Dorsolateral prefrontal cortex (tissue), 120 donors: ENCODE measurements at regions of chr16 and their contacts with region 1.

Region 1: DNA sequence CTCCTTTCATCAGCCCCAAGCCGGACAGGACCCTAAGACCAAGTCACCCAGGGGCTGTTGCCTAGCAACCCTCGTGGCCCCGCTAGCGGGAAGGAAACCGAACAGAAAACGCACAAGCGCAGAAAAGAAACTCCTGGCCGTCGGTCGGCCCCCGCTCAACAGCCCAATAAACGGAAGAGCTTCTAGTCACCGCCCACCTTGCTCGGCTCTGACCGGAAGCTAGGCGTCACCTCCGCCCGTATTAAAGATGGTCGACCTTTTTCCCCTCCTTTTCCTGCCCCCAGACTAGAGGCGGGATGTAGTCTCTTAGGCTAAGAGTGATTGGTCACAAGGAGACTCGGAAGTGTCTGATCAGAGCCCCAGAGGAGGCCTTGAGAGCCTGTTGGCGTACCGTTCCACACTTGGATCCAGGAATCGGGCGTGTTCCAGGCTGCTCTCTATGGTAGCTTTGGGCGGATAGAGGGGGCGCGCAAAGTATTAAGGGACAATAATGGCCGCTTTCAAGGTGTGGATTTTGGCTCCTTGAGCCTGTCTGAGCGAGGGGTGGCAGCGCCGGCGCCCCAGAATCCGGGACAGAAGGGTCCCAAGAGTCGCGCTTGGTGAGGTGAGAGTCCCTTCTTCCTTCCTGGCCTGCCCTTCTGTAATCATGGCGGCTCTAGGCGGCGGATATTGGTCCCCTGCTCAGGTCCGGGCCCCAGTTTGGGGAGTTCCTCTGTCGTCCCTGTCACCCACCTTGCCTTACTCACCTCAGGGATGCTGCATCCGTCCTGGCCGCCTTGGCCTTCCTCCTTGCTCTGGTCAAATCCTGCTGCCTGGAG is at the starts of genes DHX38 and TXNL4B:
- DNase-seq: peak; percentile 84 to 98 (median 96)
- H3K4me3 ChIP-seq: peak within 1 kb of the TSS; percentile 50 to 100 (median 92)
- H3K27ac ChIP-seq: peak within 1 kb of the TSS; percentile 35 to 97 (median 88)
- H3K27me3 ChIP-seq: no peaks in the 10 kb centered on the region
- CTCF ChIP-seq: peak in 38 of 56 donors; percentile 9 to 58 (median 36)
- total RNA-seq, gene DHX38: 14.9 to 69.2 (median 49.3) TPM
- total RNA-seq, gene TXNL4B: 6.8 to 28.6 (median 18.1) TPM

Region 2: DNA sequence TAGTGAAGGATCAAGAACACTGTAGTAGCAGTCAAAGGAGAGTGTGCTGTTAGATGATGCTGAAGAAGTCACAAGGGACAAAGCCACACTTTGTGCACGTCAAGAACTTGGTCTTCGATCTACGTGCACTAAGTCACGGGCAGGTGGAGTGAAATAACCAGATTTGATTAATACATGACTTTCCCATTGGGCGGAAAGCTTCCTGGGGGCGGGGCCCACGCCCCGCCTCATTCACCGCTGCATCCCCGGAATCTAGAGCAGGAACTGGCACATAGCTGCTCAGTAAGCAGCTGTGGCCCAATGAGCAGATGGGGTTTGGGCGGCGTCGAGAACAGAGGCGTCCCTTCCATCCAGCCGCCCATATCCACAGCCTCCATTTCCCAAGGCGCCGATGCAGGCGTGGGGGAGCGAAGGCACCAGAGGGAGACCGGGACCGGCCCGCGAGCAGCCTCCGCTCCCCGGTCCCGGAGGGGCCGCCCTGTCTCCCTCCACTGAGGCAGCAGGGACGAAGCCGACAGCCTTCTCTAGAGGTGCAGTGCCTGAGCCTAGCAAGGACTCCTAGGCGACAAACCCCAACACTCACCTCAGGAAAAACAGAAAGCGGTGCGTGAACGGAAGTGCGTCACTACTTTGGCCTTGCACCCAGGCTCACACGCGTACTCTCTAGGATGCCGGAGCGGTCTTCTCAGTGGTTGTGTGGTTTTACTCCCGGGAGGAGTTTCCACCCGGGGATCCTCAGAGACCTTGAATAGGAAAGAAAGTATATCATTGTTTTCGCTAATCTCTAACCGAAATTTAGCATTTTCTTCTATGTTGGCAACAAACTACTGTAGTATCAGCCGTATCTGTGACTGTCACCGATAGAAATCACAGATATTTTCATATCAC is 609.4 kb before region 1 on chr16:
- intact Hi-C with region 1: loop called in 1 of 2 experiments (anchors 10 kb)
- DNase-seq: peak; percentile 85 to 96 (median 91)
- H3K4me3 ChIP-seq: peak overlapping the region; percentile 60 to 100 (median 90)
- H3K27ac ChIP-seq: peak overlapping the region; percentile 77 to 99 (median 94)
- H3K27me3 ChIP-seq: no peaks in the 10 kb centered on the region
- CTCF ChIP-seq: peak in 33 of 56 donors; percentile 2 to 59 (median 31)

Region 3: GRCh38 chr16:71808593-71809459 is 284.8 kb before region 1 on chr16 and contains the start of gene AP1G1:
- intact Hi-C with region 1: loop called in 1 of 2 experiments (anchors 10 kb)
- DNase-seq: peak; percentile 83 to 97 (median 95)
- H3K4me3 ChIP-seq: peak within 1 kb of the TSS; percentile 66 to 100 (median 99)
- H3K27ac ChIP-seq: peak within 1 kb of the TSS; percentile 87 to 99 (median 97)
- H3K27me3 ChIP-seq: no peaks in the 10 kb centered on the region
- CTCF ChIP-seq: peak in 13 of 56 donors; percentile 3 to 39 (median 21)
- total RNA-seq, gene AP1G1: 81.3 to 131 (median 109) TPM

Region 4: GRCh38 chr16:72008424-72009216 is 85.0 kb before region 1 on chr16 and contains the start of gene DHODH:
- intact Hi-C with region 1: loop called (anchors 5 kb)
- DNase-seq: peak; percentile 93 to 99 (median 98)
- H3K4me3 ChIP-seq: peak within 1 kb of the TSS; percentile 64 to 100 (median 94)
- H3K27ac ChIP-seq: peak within 1 kb of the TSS in 42 of 59 donors; percentile 3 to 79 (median 54)
- H3K27me3 ChIP-seq: no peaks in the 10 kb centered on the region
- CTCF ChIP-seq: peak in 48 of 56 donors; percentile 9 to 64 (median 39)
- total RNA-seq, gene DHODH: 2.7 to 10.4 (median 5.8) TPM

Region 5: DNA sequence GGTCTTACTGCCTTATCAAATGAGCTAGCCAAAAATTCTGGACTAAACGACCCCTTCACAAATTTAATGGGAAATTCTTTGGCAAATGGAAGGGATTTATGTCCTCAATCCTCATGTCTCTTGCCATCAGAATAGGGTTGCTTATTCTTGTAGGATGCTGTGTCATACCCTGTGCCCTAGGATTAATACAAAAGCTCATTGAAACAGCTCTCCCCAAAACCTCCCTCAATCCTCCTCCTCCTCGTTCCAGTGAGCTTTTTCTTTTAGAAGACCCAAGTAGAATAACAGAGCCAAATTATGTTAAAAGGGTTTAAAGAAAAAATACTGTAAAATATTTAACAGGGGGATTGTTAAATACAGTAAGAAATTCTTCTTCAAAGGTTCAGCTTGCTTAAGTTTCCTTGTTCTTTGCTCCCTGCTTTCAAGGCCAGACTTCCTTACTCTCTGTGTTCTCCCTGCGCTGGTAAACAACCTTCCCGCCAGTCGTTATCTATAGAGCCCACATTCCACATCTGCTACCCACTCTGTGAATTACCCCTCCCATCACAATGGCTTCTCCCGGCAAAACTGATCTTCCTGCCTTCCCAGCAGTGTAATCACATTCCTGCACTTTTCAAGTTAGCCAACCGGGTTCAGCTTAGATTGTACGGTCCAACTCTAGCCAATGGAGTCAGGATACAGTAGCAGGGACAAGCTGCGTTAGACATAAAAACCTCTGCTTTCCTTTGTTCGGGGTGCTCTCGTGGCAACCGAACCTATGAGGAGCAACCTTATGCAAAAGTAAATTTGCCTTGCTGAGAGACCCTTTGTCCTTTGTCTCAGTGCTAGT is 20.9 kb before region 1 on chr16:
- intact Hi-C with region 1: loop called (anchors 2 kb)
- DNase-seq: no peak
- H3K4me3 ChIP-seq: peak overlapping the region in 30 of 59 donors; percentile 1 to 49 (median 18)
- H3K27ac ChIP-seq: peak overlapping the region; percentile 19 to 98 (median 90)
- H3K27me3 ChIP-seq: no peaks in the 10 kb centered on the region
- CTCF ChIP-seq: no peak

Region 6: GRCh38 chr16:72256398-72257054 is 162.9 kb after region 1 on chr16:
- intact Hi-C with region 1: no loop called
- DNase-seq: no peak
- H3K4me3 ChIP-seq: no peak overlapping the region
- H3K27ac ChIP-seq: no peak overlapping the region
- H3K27me3 ChIP-seq: no peaks in the 10 kb centered on the region
- CTCF ChIP-seq: no peak

Region 7: DNA sequence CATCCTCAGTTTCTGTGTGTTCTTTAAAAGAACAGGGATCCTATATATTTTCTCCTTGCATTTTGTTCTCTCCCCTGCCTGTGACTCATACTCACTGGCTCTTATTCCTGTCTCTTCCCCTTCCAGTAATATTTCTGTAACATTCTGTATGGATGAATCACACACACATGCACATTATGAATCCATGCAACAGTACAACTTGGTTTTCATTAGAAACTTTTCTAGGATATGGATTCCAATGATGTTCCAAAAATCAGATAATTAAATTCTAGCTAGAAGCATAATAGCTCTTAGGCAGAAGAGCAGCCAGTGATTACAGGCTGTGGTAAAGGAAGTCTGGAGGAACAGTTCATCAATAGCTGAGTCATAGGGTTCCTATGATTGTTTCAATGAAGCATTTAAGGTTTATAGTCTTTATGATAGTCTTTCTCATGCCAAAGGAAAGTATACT is 197.9 kb after region 1 on chr16:
- intact Hi-C with region 1: no loop called
- DNase-seq: no peak
- H3K4me3 ChIP-seq: no peak overlapping the region
- H3K27ac ChIP-seq: peak overlapping the region in 50 of 59 donors; percentile 4 to 85 (median 64)
- H3K27me3 ChIP-seq: no peaks in the 10 kb centered on the region
- CTCF ChIP-seq: no peak